Colonic mucosa (tissue), 4 donors: ENCODE measurements at regions of chr9 and their contacts with region 1.

Region 1: DNA sequence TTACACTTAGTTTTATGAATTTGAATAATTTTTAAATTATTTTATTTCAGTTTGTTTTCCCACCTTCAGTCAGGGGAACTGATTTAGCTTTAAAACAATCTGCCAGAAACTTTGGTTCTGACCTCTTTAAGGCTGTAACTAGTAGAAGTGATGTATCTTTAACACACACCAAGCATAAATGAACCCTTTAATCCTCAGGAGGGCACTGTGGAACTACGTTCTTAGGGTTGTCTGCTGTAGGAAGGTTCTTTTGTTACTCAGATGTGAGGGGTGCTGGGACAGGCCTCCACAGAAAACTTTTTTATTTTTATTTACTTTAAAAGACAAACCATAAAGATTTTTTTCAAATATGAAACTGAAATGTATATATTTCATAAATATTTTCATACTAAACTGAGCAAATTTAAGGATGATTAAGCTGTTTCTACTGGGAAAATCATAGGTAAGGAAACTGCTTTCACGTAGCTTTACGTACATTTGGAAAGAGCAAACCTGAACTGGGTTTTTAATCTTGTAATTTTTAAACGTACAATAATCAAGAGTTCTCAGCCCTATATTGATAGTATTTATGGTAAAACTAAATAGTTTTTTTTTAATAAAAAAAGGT is 5.3 kb downstream of the KLF4 start:
- DNase-seq: peak; percentile 64
- H3K4me3 ChIP-seq: peak overlapping the region; percentile 56
- H3K27ac ChIP-seq: peak overlapping the region; percentile 79
- H3K4me1 ChIP-seq: no peaks in the 10 kb centered on the region
- H3K27me3 ChIP-seq: no peaks in the 10 kb centered on the region
- CTCF ChIP-seq: peak; percentile 34

Region 2: DNA sequence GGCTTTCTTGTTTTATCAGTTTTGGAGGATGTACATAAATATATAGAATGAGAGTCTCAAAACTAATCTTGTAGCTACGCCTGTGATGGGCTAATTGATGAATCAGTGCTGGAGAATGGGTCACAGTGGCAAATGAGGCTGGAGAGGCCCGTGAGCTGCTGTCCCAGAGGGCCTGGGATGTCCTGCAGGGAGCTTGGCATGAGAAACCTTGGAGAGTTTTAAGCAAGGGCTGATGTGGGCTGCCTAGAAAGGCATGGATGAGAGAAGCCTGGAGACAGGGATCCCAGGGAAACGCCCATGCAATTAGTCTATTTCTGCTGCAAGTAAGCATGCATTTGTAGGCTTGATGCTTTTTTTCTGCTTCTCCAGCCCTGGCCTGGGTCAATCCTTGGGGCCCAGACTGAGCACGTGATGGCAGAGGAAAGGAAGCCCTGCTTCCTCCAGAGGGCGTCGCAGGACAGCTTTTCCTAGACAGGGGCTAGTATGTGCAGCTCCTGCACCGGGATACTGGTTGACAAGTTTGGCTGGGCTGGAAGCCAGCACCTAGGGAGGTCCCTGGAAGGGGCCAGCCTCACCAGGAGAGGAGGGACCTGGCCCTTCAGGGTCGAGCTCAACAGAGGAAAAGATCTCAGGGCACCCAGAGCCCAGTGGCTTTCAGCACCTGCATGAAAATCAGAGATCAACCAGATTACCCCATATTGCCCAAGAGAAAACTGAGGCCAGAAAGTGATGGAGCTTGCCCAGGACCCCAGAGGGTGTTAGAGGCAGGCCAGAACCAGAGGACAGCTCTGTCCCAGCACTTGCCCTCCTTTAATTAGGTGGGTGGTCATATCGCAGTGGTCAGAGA is 62.0 kb before region 1 on chr9:
- intact Hi-C with region 1: no loop called
- DNase-seq: peak; percentile 86
- H3K4me3 ChIP-seq: no peak overlapping the region
- H3K27ac ChIP-seq: no peak overlapping the region
- H3K4me1 ChIP-seq: no peaks in the 10 kb centered on the region
- H3K27me3 ChIP-seq: no peaks in the 10 kb centered on the region
- CTCF ChIP-seq: peak; percentile 70

Region 3: GRCh38 chr9:108272349-108272899 is 788.2 kb after region 1 on chr9:
- intact Hi-C with region 1: loop called (anchors 5 kb)
- DNase-seq: peak; percentile 77
- H3K4me3 ChIP-seq: no peak overlapping the region
- H3K27ac ChIP-seq: peak overlapping the region; percentile 70
- H3K4me1 ChIP-seq: no peaks in the 10 kb centered on the region
- H3K27me3 ChIP-seq: no peaks in the 10 kb centered on the region
- CTCF ChIP-seq: peak; percentile 52